ENCODE measurements at regions of chr12 and their contacts with region 1.

Region 1: DNA sequence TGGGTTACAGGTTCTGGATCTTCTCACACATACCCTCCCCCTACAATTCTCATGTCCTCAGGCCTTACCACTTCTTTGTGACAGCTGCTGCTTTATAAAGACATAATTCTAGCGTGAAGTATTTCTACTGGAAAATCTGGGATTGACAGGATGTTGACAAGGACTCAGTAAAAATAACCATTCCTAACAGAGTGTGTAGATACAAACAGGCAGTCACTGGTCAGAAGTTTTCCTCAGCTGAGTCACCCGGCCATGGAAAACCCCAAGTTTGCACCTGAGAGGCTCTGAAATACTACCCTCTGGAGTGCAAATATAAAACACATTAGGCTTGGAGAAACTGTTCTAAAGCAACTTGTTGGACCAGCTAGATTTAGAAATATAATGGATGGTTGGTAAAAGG is 54.4 kb downstream of the SPPL3 start:
- DNase-seq: peak; percentile 59
- H3K4me3 Mint-ChIP-seq: no peak overlapping the region
- H3K27ac Mint-ChIP-seq: no peak overlapping the region
- H3K4me1 Mint-ChIP-seq: peaks cover 60% of the 10 kb centered on the region
- H3K27me3 Mint-ChIP-seq: no peaks in the 10 kb centered on the region

Region 2: GRCh38 chr12:119578112-119578511 is 1271.7 kb before region 1 on chr12:
- CTCF ChIA-PET with region 1: no interaction called
- intact Hi-C with region 1: no loop called
- DNase-seq: no peak
- H3K4me3 Mint-ChIP-seq: no peak overlapping the region
- H3K27ac Mint-ChIP-seq: peak overlapping the region; percentile 1
- H3K4me1 Mint-ChIP-seq: no peaks in the 10 kb centered on the region
- H3K27me3 Mint-ChIP-seq: peaks cover 16% of the 10 kb centered on the region

Region 3: GRCh38 chr12:120640840-120641833 is 208.6 kb before region 1 on chr12:
- CTCF ChIA-PET with region 1: no interaction called
- intact Hi-C with region 1: loop called (anchors 5 kb)
- DNase-seq: peak; percentile 64
- H3K4me3 Mint-ChIP-seq: peak overlapping the region; percentile 63
- H3K27ac Mint-ChIP-seq: no peak overlapping the region
- H3K4me1 Mint-ChIP-seq: peaks cover 7% of the 10 kb centered on the region
- H3K27me3 Mint-ChIP-seq: peaks cover 39% of the 10 kb centered on the region

Region 4: GRCh38 chr12:120962532-120963020 is 112.8 kb after region 1 on chr12:
- CTCF ChIA-PET with region 1: no interaction called
- intact Hi-C with region 1: no loop called
- DNase-seq: peak; percentile 46
- H3K4me3 Mint-ChIP-seq: no peak overlapping the region
- H3K27ac Mint-ChIP-seq: peak overlapping the region; percentile 72
- H3K4me1 Mint-ChIP-seq: peaks cover 42% of the 10 kb centered on the region
- H3K27me3 Mint-ChIP-seq: no peaks in the 10 kb centered on the region

Measured in activated naive CD4-positive, alpha-beta T cell treated with anti-CD3 and anti-CD28 coated beads for 36 hours (primary cell).